Panc1 (cell line): ENCODE measurements at regions of chr2 and their contacts with region 1.

Region 1: DNA sequence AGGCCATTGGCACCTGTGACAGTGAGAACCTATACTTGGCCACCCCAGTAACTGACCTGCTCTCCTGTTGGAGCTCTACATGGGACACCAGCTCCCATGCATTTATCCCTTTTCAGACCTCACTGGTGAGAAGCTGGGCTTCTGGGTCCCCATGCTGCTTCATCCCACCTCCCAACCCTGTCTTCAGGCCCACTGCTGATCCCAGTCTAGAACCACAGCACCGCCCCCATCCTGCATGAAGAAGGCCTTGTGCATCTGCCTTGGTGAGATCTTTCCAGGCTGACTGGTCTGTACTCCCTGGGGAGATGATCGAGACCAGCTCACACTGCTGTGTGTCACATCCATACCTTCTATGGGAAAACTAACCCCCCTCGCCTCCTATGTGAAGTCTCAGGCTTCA is 22.7 kb downstream of the TTC32 start:
- DNase-seq: no peak
- ATAC-seq: no peak
- H3K4me3 ChIP-seq: no peak overlapping the region
- H3K27ac ChIP-seq: no peak overlapping the region
- H3K4me1 ChIP-seq: no peaks in the 10 kb centered on the region
- H3K27me3 ChIP-seq: no peaks in the 10 kb centered on the region
- CTCF ChIP-seq: no peak

Region 2: DNA sequence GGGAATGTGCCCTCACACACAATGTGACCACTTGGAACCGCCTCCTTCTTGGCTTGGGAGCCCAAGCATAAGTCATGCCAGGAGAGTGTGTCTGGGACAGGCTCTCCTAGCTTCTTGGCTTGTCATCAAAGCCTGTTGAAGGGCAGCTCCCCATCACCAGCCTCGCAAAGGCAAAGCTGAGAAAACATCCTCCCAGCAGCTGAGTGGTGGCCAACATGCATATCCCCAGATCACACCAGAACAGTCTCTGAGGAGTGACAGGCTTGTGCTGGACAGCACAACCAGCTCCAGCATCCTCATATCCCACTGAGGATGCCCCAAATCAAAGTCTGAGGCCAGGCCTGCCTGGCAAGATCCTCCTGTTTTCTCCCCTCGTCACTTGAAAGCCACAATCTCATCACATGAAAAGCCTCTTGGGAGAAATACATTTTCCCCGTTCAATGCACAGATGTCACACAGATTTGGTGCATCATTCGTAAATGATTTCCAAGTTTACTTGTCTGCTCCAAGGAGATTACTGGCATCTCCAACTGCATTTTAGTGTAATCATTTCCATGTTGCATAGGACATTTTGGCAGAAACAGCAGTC is 246.6 kb before region 1 on chr2:
- CTCF ChIA-PET with region 1: no interaction called
- POLR2A ChIA-PET with region 1: no interaction called
- in situ Hi-C with region 1: no loop called
- intact Hi-C with region 1: no loop called
- DNase-seq: no peak
- ATAC-seq: no peak
- H3K4me3 ChIP-seq: no peak overlapping the region
- H3K27ac ChIP-seq: no peak overlapping the region
- H3K4me1 ChIP-seq: no peaks in the 10 kb centered on the region
- H3K27me3 ChIP-seq: no peaks in the 10 kb centered on the region
- CTCF ChIP-seq: no peak

Region 3: DNA sequence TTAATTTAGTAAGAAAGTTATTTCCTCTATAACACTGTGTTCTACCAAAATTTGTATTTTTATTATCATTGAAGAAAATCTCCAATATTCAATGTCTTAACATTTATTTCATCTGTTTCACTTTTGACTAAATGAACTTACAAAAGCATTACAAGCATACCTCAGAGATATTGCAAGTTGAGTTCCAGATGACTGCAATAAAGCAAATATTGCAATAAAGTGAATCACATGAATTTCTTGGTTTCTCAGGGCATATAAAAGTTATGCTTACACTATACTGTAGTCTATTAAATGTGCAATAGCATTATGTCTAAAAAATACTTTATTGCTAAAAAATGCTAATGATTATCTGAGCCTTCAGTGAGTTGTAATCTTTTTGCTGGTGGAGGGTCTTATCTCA is 55.6 kb before region 1 on chr2:
- CTCF ChIA-PET with region 1: no interaction called
- POLR2A ChIA-PET with region 1: no interaction called
- in situ Hi-C with region 1: no loop called
- intact Hi-C with region 1: no loop called
- DNase-seq: no peak
- ATAC-seq: no peak
- H3K4me3 ChIP-seq: no peak overlapping the region
- H3K27ac ChIP-seq: no peak overlapping the region
- H3K4me1 ChIP-seq: no peaks in the 10 kb centered on the region
- H3K27me3 ChIP-seq: 0 out of 2 replicates have a peak, but pooled peaks cover 2% of the 10 kb centered on the region
- CTCF ChIP-seq: no peak

Region 4: GRCh38 chr2:19837235-19837766 is 41.8 kb before region 1 on chr2:
- CTCF ChIA-PET with region 1: no interaction called
- POLR2A ChIA-PET with region 1: no interaction called
- in situ Hi-C with region 1: no loop called
- intact Hi-C with region 1: loop called (anchors 1 kb)
- DNase-seq: no peak
- ATAC-seq: no peak
- H3K4me3 ChIP-seq: no peak overlapping the region
- H3K27ac ChIP-seq: no peak overlapping the region
- H3K4me1 ChIP-seq: no peaks in the 10 kb centered on the region
- H3K27me3 ChIP-seq: peaks cover 2% of the 10 kb centered on the region; the same call in 1 of the 2 replicates
- CTCF ChIP-seq: no peak

Region 5: GRCh38 chr2:20141122-20141762 is 262.1 kb after region 1 on chr2:
- CTCF ChIA-PET with region 1: no interaction called
- POLR2A ChIA-PET with region 1: no interaction called
- in situ Hi-C with region 1: no loop called
- intact Hi-C with region 1: no loop called
- DNase-seq: peak; percentile 67
- ATAC-seq: peak; percentile 73
- H3K4me3 ChIP-seq: no peak overlapping the region
- H3K27ac ChIP-seq: no peak overlapping the region
- H3K4me1 ChIP-seq: no peaks in the 10 kb centered on the region
- H3K27me3 ChIP-seq: no peaks in the 10 kb centered on the region
- CTCF ChIP-seq: no peak